ENCODE measurements at regions of chr5 and their contacts with region 1.

Region 1: DNA sequence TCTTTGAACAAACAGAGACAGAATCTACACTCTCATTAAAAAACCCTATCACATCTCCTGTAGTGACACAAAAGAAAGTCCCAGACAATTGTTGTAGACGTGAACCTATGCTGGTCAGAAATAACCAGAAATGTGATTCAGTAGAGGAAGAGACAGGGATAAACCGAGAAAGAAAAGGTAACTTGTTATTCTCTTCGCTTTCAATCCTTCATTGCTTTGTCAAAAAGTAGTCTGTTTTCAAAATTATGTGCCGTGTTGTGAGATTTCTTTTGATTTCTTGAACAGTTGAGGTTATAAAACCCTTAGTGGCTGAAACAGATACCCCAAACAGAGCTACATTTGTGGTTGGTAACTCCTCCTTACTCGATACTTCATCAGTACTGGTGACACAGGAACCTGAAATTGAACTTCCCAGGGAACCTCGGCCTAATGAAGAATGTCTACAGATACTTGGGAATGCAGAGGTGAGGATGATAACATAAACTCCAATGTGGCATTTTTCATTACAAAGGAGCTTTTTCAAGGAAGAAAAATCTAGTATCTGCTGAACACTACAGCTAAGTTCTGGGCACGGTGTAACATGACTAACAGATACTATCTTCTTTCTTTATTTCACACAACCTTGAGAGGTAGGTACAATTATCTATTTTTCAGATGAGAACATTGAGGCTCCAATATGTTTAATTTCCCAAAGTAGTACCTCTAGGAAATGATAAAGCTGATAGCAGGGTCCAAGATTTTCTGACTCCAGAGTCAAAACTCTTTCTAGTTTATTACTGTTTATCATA is 14.3 kb downstream of the HMGCR start:
- DNase-seq: no peak
- H3K4me3 Mint-ChIP-seq: no peak overlapping the region
- H3K27ac Mint-ChIP-seq: peak overlapping the region; percentile 74
- H3K4me1 Mint-ChIP-seq: peaks cover 27% of the 10 kb centered on the region
- H3K27me3 Mint-ChIP-seq: no peaks in the 10 kb centered on the region

Region 2: DNA sequence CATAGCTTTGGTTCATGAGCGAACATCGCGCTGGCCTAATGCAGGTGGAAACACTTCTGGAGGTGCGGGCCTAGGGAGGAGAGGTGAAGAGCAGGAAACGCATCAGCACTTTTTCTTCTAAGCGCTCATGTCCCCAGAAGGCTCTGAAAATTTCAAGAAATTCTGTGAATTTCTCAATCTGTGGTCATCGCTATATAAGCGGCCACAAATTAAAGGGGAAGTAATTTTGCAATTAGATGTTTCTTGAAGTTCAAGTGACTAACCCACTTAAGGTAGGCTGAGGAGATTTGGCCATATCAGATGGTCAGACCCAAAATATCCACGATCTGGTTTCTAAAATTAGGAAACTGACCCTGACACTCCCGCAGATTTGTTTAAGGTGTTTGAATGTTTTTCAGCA is 31.0 kb before region 1 on chr5:
- CTCF ChIA-PET with region 1: interaction called, 3 read pairs
- POLR2A ChIA-PET with region 1: interaction called, 3 read pairs
- intact Hi-C with region 1: loop called (anchors 1 kb)
- DNase-seq: no peak
- H3K4me3 Mint-ChIP-seq: no peak overlapping the region
- H3K27ac Mint-ChIP-seq: no peak overlapping the region
- H3K4me1 Mint-ChIP-seq: peaks cover 21% of the 10 kb centered on the region
- H3K27me3 Mint-ChIP-seq: no peaks in the 10 kb centered on the region